ENCODE measurements at regions of chr7 and their contacts with region 1.

Region 1: GRCh38 chr7:135414850-135415439 is 95.0 kb downstream of the CNOT4 start:
- DNase-seq: peak; percentile 24
- H3K4me3 ChIP-seq: no peak overlapping the region
- H3K27ac ChIP-seq: no peak overlapping the region
- H3K4me1 ChIP-seq: peaks cover 5% of the 10 kb centered on the region
- H3K27me3 ChIP-seq: no peaks in the 10 kb centered on the region
- CTCF ChIP-seq: peak; percentile 50 to 62

Region 2: GRCh38 chr7:135320277-135320676 is 94.7 kb before region 1 on chr7:
- CTCF ChIA-PET with region 1: no interaction called
- dilution Hi-C with region 1: no loop called
- in situ Hi-C with region 1: no loop called
- intact Hi-C with region 1: no loop called
- DNase-seq: peak; percentile 86
- H3K4me3 ChIP-seq: no peak overlapping the region
- H3K27ac ChIP-seq: no peak overlapping the region
- H3K4me1 ChIP-seq: peaks cover 7% of the 10 kb centered on the region
- H3K27me3 ChIP-seq: no peaks in the 10 kb centered on the region
- CTCF ChIP-seq: no peak

Region 3: DNA sequence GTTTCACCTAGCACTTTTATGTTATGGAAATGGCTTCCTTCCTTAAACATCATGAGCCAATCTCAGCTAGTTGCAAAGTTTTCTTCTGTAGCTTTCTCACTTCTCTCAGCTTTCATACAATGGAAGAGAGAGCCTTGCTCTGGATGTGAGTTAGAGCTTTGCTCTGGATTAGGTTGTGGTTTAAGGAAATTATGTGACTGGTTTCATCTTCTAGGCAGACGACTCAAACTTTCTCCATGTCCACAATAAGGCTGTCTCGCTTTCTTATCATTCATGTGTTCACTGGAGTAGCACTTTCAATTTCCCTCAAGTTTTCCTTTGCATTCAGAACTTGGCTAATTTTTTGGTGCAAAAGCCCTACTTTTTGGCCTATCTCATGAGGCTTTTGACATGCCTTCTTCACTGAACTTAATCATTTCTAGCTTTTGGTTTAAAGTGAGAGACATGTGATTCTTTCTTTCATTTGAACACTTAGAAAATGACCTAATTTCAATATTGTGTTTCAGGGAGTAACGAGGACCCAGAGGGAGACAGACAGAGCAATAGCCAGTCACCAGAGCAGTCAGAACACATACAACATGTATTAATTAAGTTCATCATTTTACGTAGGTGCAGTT is 45.1 kb after region 1 on chr7:
- CTCF ChIA-PET with region 1: no interaction called
- dilution Hi-C with region 1: loop called (anchors 5 kb)
- in situ Hi-C with region 1: no loop called
- intact Hi-C with region 1: no loop called
- DNase-seq: no peak
- H3K4me3 ChIP-seq: no peak overlapping the region
- H3K27ac ChIP-seq: no peak overlapping the region
- H3K4me1 ChIP-seq: no peaks in the 10 kb centered on the region
- H3K27me3 ChIP-seq: no peaks in the 10 kb centered on the region
- CTCF ChIP-seq: no peak

Region 4: GRCh38 chr7:135509903-135510602 is 95.1 kb after region 1 on chr7 and contains the start of gene CNOT4:
- CTCF ChIA-PET with region 1: no interaction called
- dilution Hi-C with region 1: no loop called
- in situ Hi-C with region 1: no loop called
- intact Hi-C with region 1: loop called (anchors 2 kb)
- DNase-seq: peak; percentile 96
- H3K4me3 ChIP-seq: peak within 1 kb of the TSS; percentile 73 to 91 (median 86)
- H3K27ac ChIP-seq: peak within 1 kb of the TSS; percentile 95
- H3K4me1 ChIP-seq: peaks cover 7% of the 10 kb centered on the region
- H3K27me3 ChIP-seq: no peaks in the 10 kb centered on the region
- CTCF ChIP-seq: no peak
- total RNA-seq, gene CNOT4: 12.7 to 23.1 TPM

Region 5: GRCh38 chr7:135558337-135558767 is 143.4 kb after region 1 on chr7:
- CTCF ChIA-PET with region 1: no interaction called
- dilution Hi-C with region 1: no loop called
- in situ Hi-C with region 1: no loop called
- intact Hi-C with region 1: loop called (anchors 1 kb)
- DNase-seq: peak; percentile 64
- H3K4me3 ChIP-seq: peak overlapping the region; percentile 76 to 83 (median 79)
- H3K27ac ChIP-seq: peak overlapping the region; percentile 94
- H3K4me1 ChIP-seq: peaks cover 11% of the 10 kb centered on the region
- H3K27me3 ChIP-seq: no peaks in the 10 kb centered on the region
- CTCF ChIP-seq: peak; percentile 39 to 64